Activated CD4-positive, alpha-beta T cell treated with anti-CD3 and anti-CD28 coated beads for 36 hours (primary cell): ENCODE measurements at regions of chr2 and their contacts with region 1.

Region 1: GRCh38 chr2:96208143-96209010 is at the start of gene STARD7:
- DNase-seq: peak; percentile 99
- ATAC-seq: peak; percentile 94
- H3K4me3 Mint-ChIP-seq: peak within 1 kb of the TSS; percentile 100
- H3K27ac Mint-ChIP-seq: peak within 1 kb of the TSS; percentile 96
- H3K4me1 Mint-ChIP-seq: peaks cover 45% of the 10 kb centered on the region
- H3K27me3 Mint-ChIP-seq: no peaks in the 10 kb centered on the region
- total RNA-seq, gene STARD7: 151 to 173 TPM

Region 2: DNA sequence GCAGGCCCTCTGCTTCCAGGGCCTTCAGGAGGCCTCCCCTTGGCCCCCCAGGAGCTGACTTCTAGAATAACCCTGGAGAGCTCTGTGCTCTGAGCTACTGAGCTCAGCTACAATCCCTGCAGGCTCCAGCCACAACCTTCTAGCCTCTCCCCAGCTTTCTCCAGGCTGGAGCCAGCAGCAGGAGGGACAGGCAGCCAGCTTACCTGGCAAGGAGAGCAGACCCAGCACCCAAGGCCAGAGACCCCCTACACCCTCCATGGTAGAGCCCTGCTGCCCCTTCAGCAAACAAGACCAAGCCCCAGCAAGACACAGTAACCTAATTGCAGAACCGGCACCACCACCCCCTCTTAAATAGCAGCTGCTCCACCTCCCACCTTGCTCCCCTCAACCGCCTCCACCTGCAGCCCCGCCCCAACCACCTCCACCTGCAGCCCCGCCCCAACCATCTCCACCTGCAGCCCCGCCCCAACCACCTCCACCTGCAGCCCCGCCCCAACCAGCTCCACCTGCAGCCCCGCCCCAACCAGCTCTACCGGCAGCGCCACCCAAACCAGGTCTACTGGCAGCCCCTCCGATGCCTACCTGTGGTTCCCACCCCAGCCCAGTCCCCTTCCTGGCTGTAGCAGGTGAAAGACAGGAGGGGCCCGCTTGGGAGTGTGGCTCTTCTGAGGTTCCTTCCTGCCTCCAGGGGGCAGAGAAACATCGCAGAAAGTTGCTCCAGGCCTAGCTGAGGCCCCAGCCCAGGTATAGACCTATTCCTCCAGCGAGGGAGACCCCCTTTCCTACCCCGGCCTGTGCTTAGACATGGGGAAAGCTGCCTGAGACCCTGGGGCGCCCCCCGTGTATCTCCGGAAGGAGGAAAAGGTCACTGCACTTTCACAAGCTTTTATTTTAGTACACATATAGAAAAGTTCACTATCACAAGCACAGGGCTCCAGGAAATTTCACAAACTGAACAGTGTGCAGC is 69.9 kb before region 1 on chr2 and contains the start of gene ASTL:
- CTCF ChIA-PET with region 1: interaction called, 4 read pairs
- POLR2A ChIA-PET with region 1: interaction called, 9 read pairs
- intact Hi-C with region 1: loop called in 1 of 2 experiments (anchors 1 kb)
- DNase-seq: peak; percentile 82
- ATAC-seq: peak; percentile 33
- H3K4me3 Mint-ChIP-seq: no peak within 1 kb of the TSS
- H3K27ac Mint-ChIP-seq: no peak within 1 kb of the TSS
- H3K4me1 Mint-ChIP-seq: peaks cover 28% of the 10 kb centered on the region
- H3K27me3 Mint-ChIP-seq: no peaks in the 10 kb centered on the region
- total RNA-seq, gene ASTL: 2.5 to 2.8 TPM

Region 3: GRCh38 chr2:96164459-96165184 is 43.8 kb before region 1 on chr2:
- CTCF ChIA-PET with region 1: no interaction called
- POLR2A ChIA-PET with region 1: interaction called, 3 read pairs
- intact Hi-C with region 1: loop called in 1 of 2 experiments (anchors 2 kb)
- DNase-seq: peak; percentile 88
- ATAC-seq: peak; percentile 85
- H3K4me3 Mint-ChIP-seq: peak overlapping the region; percentile 82
- H3K27ac Mint-ChIP-seq: peak overlapping the region; percentile 100
- H3K4me1 Mint-ChIP-seq: peaks cover 80% of the 10 kb centered on the region
- H3K27me3 Mint-ChIP-seq: no peaks in the 10 kb centered on the region

Region 4: GRCh38 chr2:96305091-96305978 is 97.0 kb after region 1 on chr2 and contains the start of gene SNRNP200:
- CTCF ChIA-PET with region 1: interaction called, 3 read pairs
- POLR2A ChIA-PET with region 1: no interaction called
- intact Hi-C with region 1: loop called in 1 of 2 experiments (anchors 1 kb)
- DNase-seq: peak; percentile 96
- ATAC-seq: peak; percentile 97
- H3K4me3 Mint-ChIP-seq: peak within 1 kb of the TSS; percentile 100
- H3K27ac Mint-ChIP-seq: peak within 1 kb of the TSS; percentile 99
- H3K4me1 Mint-ChIP-seq: peaks cover 46% of the 10 kb centered on the region
- H3K27me3 Mint-ChIP-seq: no peaks in the 10 kb centered on the region
- total RNA-seq, gene SNRNP200: 176 to 198 TPM

Region 5: GRCh38 chr2:96396095-96396494 is 187.7 kb after region 1 on chr2:
- CTCF ChIA-PET with region 1: no interaction called
- POLR2A ChIA-PET with region 1: no interaction called
- intact Hi-C with region 1: no loop called
- DNase-seq: no peak
- ATAC-seq: no peak
- H3K4me3 Mint-ChIP-seq: no peak overlapping the region
- H3K27ac Mint-ChIP-seq: no peak overlapping the region
- H3K4me1 Mint-ChIP-seq: no peaks in the 10 kb centered on the region
- H3K27me3 Mint-ChIP-seq: no peaks in the 10 kb centered on the region

Region 6: GRCh38 chr2:96509114-96509846 is 300.9 kb after region 1 on chr2:
- CTCF ChIA-PET with region 1: no interaction called
- POLR2A ChIA-PET with region 1: no interaction called
- intact Hi-C with region 1: loop called in 1 of 2 experiments (anchors 1 kb)
- DNase-seq: peak; percentile 87
- ATAC-seq: peak; percentile 58
- H3K4me3 Mint-ChIP-seq: no peak overlapping the region
- H3K27ac Mint-ChIP-seq: peak overlapping the region; percentile 39
- H3K4me1 Mint-ChIP-seq: peaks cover 18% of the 10 kb centered on the region
- H3K27me3 Mint-ChIP-seq: peaks cover 12% of the 10 kb centered on the region

Region 7: GRCh38 chr2:96816128-96816835 is 607.9 kb after region 1 on chr2 and contains the start of gene CNNM3:
- CTCF ChIA-PET with region 1: no interaction called
- POLR2A ChIA-PET with region 1: no interaction called
- intact Hi-C with region 1: loop called in 1 of 2 experiments (anchors 1 kb)
- DNase-seq: peak; percentile 97
- ATAC-seq: peak; percentile 93
- H3K4me3 Mint-ChIP-seq: peak within 1 kb of the TSS; percentile 81
- H3K27ac Mint-ChIP-seq: peak within 1 kb of the TSS; percentile 56
- H3K4me1 Mint-ChIP-seq: peaks cover 46% of the 10 kb centered on the region
- H3K27me3 Mint-ChIP-seq: no peaks in the 10 kb centered on the region
- total RNA-seq, gene CNNM3: 19.2 to 31.2 TPM